Activated CD4-positive, alpha-beta T cell treated with anti-CD3 and anti-CD28 coated beads for 36 hours (primary cell): ENCODE measurements at regions of chr14 and their contacts with region 1.

Region 1: GRCh38 chr14:34982417-34983147 is at the start of gene SRP54:
- DNase-seq: peak; percentile 100
- ATAC-seq: peak; percentile 91
- H3K4me3 Mint-ChIP-seq: no peak within 1 kb of the TSS
- H3K27ac Mint-ChIP-seq: no peak within 1 kb of the TSS
- H3K4me1 Mint-ChIP-seq: peaks cover 16% of the 10 kb centered on the region
- H3K27me3 Mint-ChIP-seq: no peaks in the 10 kb centered on the region
- total RNA-seq, gene SRP54: 81.1 to 88.4 TPM

Region 2: GRCh38 chr14:33631456-33631855 is 1351.1 kb before region 1 on chr14:
- CTCF ChIA-PET with region 1: no interaction called
- POLR2A ChIA-PET with region 1: no interaction called
- intact Hi-C with region 1: no loop called
- DNase-seq: no peak
- ATAC-seq: no peak
- H3K4me3 Mint-ChIP-seq: no peak overlapping the region
- H3K27ac Mint-ChIP-seq: no peak overlapping the region
- H3K4me1 Mint-ChIP-seq: no peaks in the 10 kb centered on the region
- H3K27me3 Mint-ChIP-seq: no peaks in the 10 kb centered on the region

Region 3: GRCh38 chr14:34461334-34462131 is 521.0 kb before region 1 on chr14:
- CTCF ChIA-PET with region 1: no interaction called
- POLR2A ChIA-PET with region 1: no interaction called
- intact Hi-C with region 1: loop called in 1 of 2 experiments (anchors 1 kb)
- DNase-seq: peak; percentile 50
- ATAC-seq: peak; percentile 62
- H3K4me3 Mint-ChIP-seq: peak overlapping the region; percentile 91
- H3K27ac Mint-ChIP-seq: peak overlapping the region; percentile 85
- H3K4me1 Mint-ChIP-seq: peaks cover 19% of the 10 kb centered on the region
- H3K27me3 Mint-ChIP-seq: no peaks in the 10 kb centered on the region

Region 4: DNA sequence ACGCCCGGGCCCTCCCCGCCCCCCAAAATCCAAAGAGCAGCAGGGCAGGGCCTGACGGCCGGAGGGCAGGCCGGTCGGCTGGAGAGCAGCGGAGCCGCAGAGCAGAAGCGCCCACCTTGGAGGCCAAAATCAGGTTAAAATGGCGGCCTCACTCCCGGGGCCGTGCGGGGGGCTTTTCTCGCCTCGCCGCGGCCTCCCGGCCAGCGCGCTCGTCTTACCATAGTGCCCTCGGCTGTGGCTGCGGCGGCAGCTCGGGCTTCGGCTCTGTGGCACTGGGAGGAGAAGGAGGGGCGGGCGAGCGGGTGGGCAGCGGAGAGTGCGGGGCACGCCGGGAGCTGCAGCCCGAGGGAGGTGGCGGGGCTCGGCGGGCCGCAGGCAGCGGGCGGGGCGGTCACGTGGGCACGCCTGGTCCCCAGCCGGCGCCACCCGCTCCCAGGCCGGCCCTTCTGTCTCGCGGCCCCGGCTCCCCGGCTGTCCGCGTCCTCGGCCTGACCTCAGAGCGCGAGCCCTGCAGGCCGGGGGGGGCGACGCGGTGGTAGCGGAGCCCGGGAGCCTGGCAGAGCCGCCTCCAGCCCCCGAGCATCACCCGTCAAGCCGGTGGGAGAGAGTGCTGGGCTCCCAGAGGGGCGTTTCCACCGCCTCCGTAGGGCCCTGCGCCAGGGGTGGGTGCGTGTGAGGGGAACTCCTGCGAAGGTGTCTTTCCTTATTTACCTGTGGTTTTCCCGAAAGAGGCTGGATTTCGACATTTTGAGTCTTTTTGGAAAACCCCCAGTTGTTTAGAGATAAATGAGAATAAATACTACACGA is 268.1 kb before region 1 on chr14 and contains the start of gene CFL2:
- CTCF ChIA-PET with region 1: no interaction called
- POLR2A ChIA-PET with region 1: no interaction called
- intact Hi-C with region 1: loop called (anchors 2 to 10 kb)
- DNase-seq: peak; percentile 79
- ATAC-seq: peak; percentile 84
- H3K4me3 Mint-ChIP-seq: peak within 1 kb of the TSS; percentile 91
- H3K27ac Mint-ChIP-seq: peak within 1 kb of the TSS; percentile 91
- H3K4me1 Mint-ChIP-seq: peaks cover 21% of the 10 kb centered on the region
- H3K27me3 Mint-ChIP-seq: no peaks in the 10 kb centered on the region
- total RNA-seq, gene CFL2: 4.5 to 6.8 TPM

Region 5: DNA sequence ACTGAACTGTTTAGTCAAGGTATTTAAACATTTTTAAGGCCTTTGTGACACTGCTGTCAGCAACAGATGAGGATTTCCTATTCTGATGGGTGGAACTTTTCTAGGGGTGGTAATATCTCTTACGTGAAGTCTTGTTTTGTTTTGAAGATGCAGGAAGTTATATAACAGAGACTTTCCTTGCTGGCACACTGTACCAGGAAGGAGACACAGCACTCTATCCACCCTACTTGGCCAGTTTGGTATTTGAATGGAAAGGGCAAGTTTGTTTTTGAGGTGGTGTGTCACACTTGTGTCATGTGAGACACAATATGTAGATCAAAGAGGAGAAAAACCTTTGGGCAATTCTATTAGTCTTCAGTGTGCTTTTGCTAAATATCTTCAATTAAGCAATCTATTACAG is 51.4 kb before region 1 on chr14:
- CTCF ChIA-PET with region 1: interaction called, 3 read pairs
- POLR2A ChIA-PET with region 1: interaction called, 6 read pairs
- intact Hi-C with region 1: loop called (anchors 1 kb)
- DNase-seq: peak; percentile 25
- ATAC-seq: peak; percentile 72
- H3K4me3 Mint-ChIP-seq: peak overlapping the region; percentile 47
- H3K27ac Mint-ChIP-seq: peak overlapping the region; percentile 100
- H3K4me1 Mint-ChIP-seq: peaks cover 44% of the 10 kb centered on the region
- H3K27me3 Mint-ChIP-seq: no peaks in the 10 kb centered on the region

Region 6: DNA sequence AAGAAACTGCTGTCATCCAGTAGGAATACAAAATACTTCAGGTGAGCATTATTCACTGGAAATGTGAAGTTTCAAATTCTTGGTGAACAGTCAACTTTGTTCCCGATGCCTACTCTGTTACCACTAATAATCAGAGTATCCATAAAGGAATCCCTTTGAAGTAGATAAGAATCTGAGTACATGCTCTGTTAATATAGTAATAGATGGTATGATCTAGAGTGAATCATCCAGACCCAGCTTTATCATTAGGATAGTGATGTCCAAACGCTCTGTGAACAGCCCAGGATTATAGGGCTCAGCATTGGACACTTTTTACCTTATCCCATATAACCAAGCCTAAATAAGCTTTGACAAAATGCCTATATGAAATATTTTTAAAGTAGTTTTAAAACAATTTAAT is 105.9 kb after region 1 on chr14:
- CTCF ChIA-PET with region 1: interaction called, 3 read pairs
- POLR2A ChIA-PET with region 1: interaction called, 13 read pairs
- intact Hi-C with region 1: no loop called
- DNase-seq: no peak
- ATAC-seq: no peak
- H3K4me3 Mint-ChIP-seq: no peak overlapping the region
- H3K27ac Mint-ChIP-seq: peak overlapping the region; percentile 15
- H3K4me1 Mint-ChIP-seq: no peaks in the 10 kb centered on the region
- H3K27me3 Mint-ChIP-seq: no peaks in the 10 kb centered on the region

Region 7: GRCh38 chr14:35331605-35332516 is 349.3 kb after region 1 on chr14:
- CTCF ChIA-PET with region 1: no interaction called
- POLR2A ChIA-PET with region 1: no interaction called
- intact Hi-C with region 1: loop called in 1 of 2 experiments (anchors 1 kb)
- DNase-seq: no peak
- ATAC-seq: no peak
- H3K4me3 Mint-ChIP-seq: no peak overlapping the region
- H3K27ac Mint-ChIP-seq: peak overlapping the region; percentile 96
- H3K4me1 Mint-ChIP-seq: peaks cover 32% of the 10 kb centered on the region
- H3K27me3 Mint-ChIP-seq: no peaks in the 10 kb centered on the region